ENCODE measurements at regions of chr6 and their contacts with region 1.

Region 1: GRCh38 chr6:35534407-35535170 is 21.9 kb upstream of the TULP1 start:
- DNase-seq: peak; percentile 82
- H3K4me3 ChIP-seq: no peak overlapping the region
- H3K27ac ChIP-seq: peak overlapping the region in 1 of 2 experiments; percentile 82; a peak in 2 of 4 replicates
- H3K4me1 ChIP-seq: peaks cover 0 to 33% of the 10 kb centered on the region in 2 experiments; a peak in 1 of 4 replicates
- H3K27me3 ChIP-seq: no peaks in the 10 kb centered on the region
- CTCF ChIP-seq: no peak
- EP300 ChIP-seq: peak in 1 of 2 experiments; percentile 98; a peak in 2 of 4 replicates
- RAD21 ChIP-seq: peak; percentile 24; the same call in 1 of the 2 replicates

Region 2: GRCh38 chr6:35552285-35552917 is 17.8 kb after region 1 on chr6:
- CTCF ChIA-PET with region 1: interaction called, 12 read pairs
- POLR2A ChIA-PET with region 1: no interaction called
- DNase-seq: peak; percentile 40
- H3K4me3 ChIP-seq: no peak overlapping the region
- H3K27ac ChIP-seq: no peak overlapping the region
- H3K4me1 ChIP-seq: no peaks in the 10 kb centered on the region; a peak in 1 of 4 replicates
- H3K27me3 ChIP-seq: no peaks in the 10 kb centered on the region
- CTCF ChIP-seq: peak; percentile 66
- EP300 ChIP-seq: no peak
- RAD21 ChIP-seq: peak; percentile 75

Region 3: DNA sequence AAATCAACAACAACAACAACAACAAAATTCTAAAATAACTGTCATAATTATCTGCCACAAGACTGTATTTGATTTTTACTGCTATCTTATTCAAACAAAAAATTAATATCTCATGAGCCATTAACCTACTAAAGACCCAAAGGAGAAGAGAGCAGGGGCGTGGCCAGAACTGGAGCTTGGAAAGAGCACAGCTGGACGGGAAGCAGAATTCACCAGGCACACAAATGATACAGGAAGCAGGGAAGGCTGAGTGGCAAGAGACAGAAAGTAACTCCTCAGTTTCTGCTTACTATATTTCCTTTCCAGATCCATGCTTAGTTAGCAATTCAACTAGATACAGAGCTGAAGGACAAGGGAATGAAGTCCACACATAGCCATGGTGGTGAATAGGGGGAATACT is 99.7 kb after region 1 on chr6:
- CTCF ChIA-PET with region 1: no interaction called
- POLR2A ChIA-PET with region 1: no interaction called
- DNase-seq: no peak
- H3K4me3 ChIP-seq: no peak overlapping the region
- H3K27ac ChIP-seq: no peak overlapping the region
- H3K4me1 ChIP-seq: no peaks in the 10 kb centered on the region; a peak in 1 of 4 replicates
- H3K27me3 ChIP-seq: no peaks in the 10 kb centered on the region
- CTCF ChIP-seq: no peak
- EP300 ChIP-seq: no peak
- RAD21 ChIP-seq: no peak

Measured in SK-N-SH (cell line).